Colonic mucosa (tissue), 4 donors: ENCODE measurements at regions of chr13 and their contacts with region 1.

Region 1: GRCh38 chr13:24220086-24220703 is 59.7 kb downstream of the SPATA13 start:
- DNase-seq: peak; percentile 78
- H3K4me3 ChIP-seq: no peak overlapping the region
- H3K27ac ChIP-seq: no peak overlapping the region
- H3K4me1 ChIP-seq: no peaks in the 10 kb centered on the region
- H3K27me3 ChIP-seq: no peaks in the 10 kb centered on the region
- CTCF ChIP-seq: peak; percentile 77

Region 2: GRCh38 chr13:24020375-24020830 is 199.8 kb before region 1 on chr13:
- intact Hi-C with region 1: loop called (anchors 2 kb)
- DNase-seq: peak; percentile 67
- H3K4me3 ChIP-seq: no peak overlapping the region
- H3K27ac ChIP-seq: no peak overlapping the region
- H3K4me1 ChIP-seq: no peaks in the 10 kb centered on the region
- H3K27me3 ChIP-seq: no peaks in the 10 kb centered on the region
- CTCF ChIP-seq: peak; percentile 68

Region 3: GRCh38 chr13:24053519-24054251 is 166.5 kb before region 1 on chr13:
- intact Hi-C with region 1: loop called (anchors 2 kb)
- DNase-seq: peak; percentile 75
- H3K4me3 ChIP-seq: no peak overlapping the region
- H3K27ac ChIP-seq: no peak overlapping the region
- H3K4me1 ChIP-seq: no peaks in the 10 kb centered on the region
- H3K27me3 ChIP-seq: no peaks in the 10 kb centered on the region
- CTCF ChIP-seq: peak; percentile 70

Region 4: DNA sequence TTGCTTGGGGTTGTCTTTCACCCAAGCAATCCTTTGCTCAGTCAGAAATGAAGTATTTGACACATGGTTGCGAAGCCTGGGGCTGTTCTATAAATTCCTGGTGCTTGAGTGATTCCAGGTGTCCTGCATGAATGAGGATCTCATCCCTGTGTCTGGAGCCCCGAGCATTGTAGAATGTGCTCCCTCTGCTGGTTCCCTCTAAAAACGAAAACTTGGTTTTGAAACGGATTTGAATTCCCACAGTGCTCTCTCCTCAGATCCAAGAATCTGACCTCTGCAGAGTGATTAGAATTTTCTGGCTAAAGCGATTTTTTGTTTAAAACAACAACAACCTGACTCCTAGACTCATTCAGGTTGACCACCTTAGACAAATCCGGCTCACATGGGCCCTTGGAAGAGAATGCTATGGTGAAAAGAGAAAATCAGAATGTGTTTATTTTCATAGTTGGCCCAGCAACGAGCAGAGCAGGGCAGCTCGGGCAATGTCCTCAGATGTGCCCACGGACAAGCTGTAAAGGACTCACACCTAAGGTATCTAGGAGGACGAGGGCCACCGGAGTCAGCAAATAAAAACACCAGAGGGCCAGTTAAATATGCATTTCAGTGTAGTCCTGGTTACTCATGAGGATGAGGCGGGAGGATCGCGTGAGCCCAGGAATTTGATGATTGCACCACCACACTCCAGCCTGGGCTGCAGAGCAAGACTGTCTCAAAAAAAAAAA is 451.4 kb after region 1 on chr13:
- intact Hi-C with region 1: no loop called
- DNase-seq: peak; percentile 77
- H3K4me3 ChIP-seq: no peak overlapping the region
- H3K27ac ChIP-seq: peak overlapping the region; percentile 81
- H3K4me1 ChIP-seq: peaks cover 8% of the 10 kb centered on the region
- H3K27me3 ChIP-seq: no peaks in the 10 kb centered on the region
- CTCF ChIP-seq: peak; percentile 42